Endothelial cell of umbilical vein (primary cell): ENCODE measurements at regions of chr7 and their contacts with region 1.

Region 1: GRCh38 chr7:77252506-77252905 is 52.9 kb upstream of the FGL2 start:
- DNase-seq: no peak
- H3K4me3 ChIP-seq: no peak overlapping the region
- H3K27ac ChIP-seq: no peak overlapping the region
- H3K4me1 ChIP-seq: peaks cover 4% of the 10 kb centered on the region
- H3K27me3 ChIP-seq: no peaks in the 10 kb centered on the region
- CTCF ChIP-seq: no peak
- POLR2A ChIP-seq: no peak

Region 2: GRCh38 chr7:77208416-77208815 is 44.1 kb before region 1 on chr7:
- CTCF ChIA-PET with region 1: no interaction called
- POLR2A ChIA-PET with region 1: no interaction called
- dilution Hi-C with region 1: no loop called
- intact Hi-C with region 1: no loop called
- DNase-seq: no peak
- H3K4me3 ChIP-seq: no peak overlapping the region
- H3K27ac ChIP-seq: no peak overlapping the region
- H3K4me1 ChIP-seq: no peaks in the 10 kb centered on the region
- H3K27me3 ChIP-seq: no peaks in the 10 kb centered on the region
- CTCF ChIP-seq: no peak
- POLR2A ChIP-seq: no peak

Region 3: DNA sequence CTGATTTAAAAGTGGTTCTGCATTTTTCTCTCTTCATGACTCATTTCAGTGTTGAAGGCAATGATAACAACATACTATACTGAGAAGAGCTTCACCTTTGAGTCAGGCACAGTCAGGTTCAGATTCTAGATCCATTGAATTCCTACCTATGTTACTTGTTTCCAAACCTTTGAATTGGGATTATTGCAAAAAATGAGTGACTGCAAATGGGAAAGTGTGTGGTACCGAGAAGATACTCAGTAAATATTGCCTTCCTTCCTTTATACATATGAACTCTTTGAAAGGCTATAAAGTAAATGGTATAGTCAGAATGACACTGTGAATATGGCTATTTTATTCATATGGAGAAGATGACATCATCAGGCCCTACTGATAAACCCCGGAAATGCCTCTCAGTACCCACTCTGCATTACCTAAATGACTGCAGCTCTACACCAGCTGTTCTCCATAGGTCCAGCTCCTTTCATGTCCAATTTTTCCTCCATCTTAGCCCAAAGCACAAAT is 13.8 kb after region 1 on chr7:
- CTCF ChIA-PET with region 1: interaction called, 10 read pairs
- POLR2A ChIA-PET with region 1: interaction called, 3 read pairs
- dilution Hi-C with region 1: no loop called
- intact Hi-C with region 1: no loop called
- DNase-seq: no peak
- H3K4me3 ChIP-seq: no peak overlapping the region
- H3K27ac ChIP-seq: no peak overlapping the region
- H3K4me1 ChIP-seq: peaks cover 5% of the 10 kb centered on the region
- H3K27me3 ChIP-seq: no peaks in the 10 kb centered on the region
- CTCF ChIP-seq: no peak
- POLR2A ChIP-seq: no peak

Region 4: DNA sequence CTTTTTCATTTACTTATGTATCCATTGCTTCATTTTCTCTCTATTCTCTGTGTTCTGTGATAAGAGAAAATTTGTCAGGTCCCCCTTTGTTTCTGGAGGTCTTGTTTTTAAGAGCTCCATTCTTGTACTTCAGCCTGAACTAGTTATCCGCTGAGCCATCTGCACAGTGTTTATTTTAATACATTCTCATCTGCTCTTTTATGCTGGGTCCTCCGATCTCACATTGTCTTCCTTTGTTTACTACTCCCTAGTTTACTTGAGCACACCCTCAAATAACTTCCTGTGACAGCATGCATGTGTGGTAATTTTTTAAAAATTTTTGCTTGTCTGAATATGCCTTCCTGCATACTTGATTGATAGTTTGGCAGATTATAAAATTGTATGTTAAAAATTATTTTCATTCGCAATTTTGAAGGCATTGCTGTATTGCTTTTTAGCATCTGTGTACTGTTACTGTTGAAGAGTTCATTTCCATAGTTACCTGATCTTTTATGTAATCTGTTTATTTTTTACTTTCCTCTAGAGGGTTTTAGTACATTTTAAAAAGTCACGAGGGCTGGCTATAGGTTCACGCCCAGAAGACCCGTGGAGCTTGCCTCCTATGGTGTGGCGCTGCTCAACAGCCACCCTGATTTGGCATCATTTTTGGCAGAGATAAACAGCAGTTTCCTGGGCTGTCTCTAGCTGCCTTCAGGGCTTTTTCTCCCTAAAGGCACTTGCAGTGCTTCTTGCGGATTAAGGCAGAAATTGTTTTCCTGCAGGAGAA is 475.6 kb after region 1 on chr7:
- CTCF ChIA-PET with region 1: no interaction called
- POLR2A ChIA-PET with region 1: no interaction called
- dilution Hi-C with region 1: no loop called
- intact Hi-C with region 1: no loop called
- DNase-seq: peak; percentile 67
- H3K4me3 ChIP-seq: no peak overlapping the region
- H3K27ac ChIP-seq: no peak overlapping the region
- H3K4me1 ChIP-seq: peaks cover 7% of the 10 kb centered on the region
- H3K27me3 ChIP-seq: no peaks in the 10 kb centered on the region
- CTCF ChIP-seq: no peak
- POLR2A ChIP-seq: no peak